ENCODE measurements at regions of chr5 and their contacts with region 1.

Region 1: DNA sequence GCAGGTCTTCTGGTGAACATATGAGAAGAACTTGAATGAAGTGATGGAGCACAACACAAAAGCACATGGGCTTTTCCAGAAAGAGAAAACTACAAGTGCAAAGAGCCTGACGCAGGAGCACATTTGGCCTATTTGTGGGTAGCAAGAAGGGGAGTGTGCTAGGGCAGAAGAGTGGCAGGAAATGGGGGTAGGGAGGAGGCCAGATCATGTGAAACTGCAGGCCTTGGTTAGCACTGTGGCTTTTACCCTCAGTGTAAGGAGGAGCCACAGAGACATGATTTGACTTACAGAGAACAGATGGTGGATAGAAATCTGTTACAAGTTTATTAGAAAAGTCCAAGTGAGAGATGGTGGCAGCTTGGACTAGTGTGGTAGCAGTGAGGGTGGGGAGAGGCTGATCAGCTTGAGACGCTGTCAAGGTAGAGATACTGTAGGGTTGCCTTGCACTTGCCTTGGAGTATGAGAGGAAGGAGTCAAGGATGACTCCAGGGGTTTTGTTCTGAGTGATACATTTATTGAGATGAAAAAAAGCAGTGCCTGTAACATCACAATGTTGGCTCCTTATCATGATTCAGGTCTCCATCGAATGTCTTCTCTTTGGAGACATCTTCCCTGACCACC is 126.7 kb downstream of the PPP2R2B start:
- DNase-seq: peak; percentile 31 to 92 (median 58)
- ATAC-seq: peak; percentile 98
- H3K4me3 ChIP-seq: peak overlapping the region in 1 of 2 experiments; percentile 25
- H3K4me3 Mint-ChIP-seq: peak overlapping the region; percentile 58
- H3K27ac ChIP-seq: peak overlapping the region; percentile 37 to 80
- H3K27ac Mint-ChIP-seq: peak overlapping the region; percentile 92
- H3K4me1 ChIP-seq: peaks cover 50% of the 10 kb centered on the region
- H3K4me1 Mint-ChIP-seq: peaks cover 58% of the 10 kb centered on the region
- H3K27me3 ChIP-seq: no peaks in the 10 kb centered on the region
- H3K27me3 Mint-ChIP-seq: no peaks in the 10 kb centered on the region
- CTCF ChIP-seq: no peak

Region 2: GRCh38 chr5:146878476-146879172 is 126.7 kb after region 1 on chr5 and contains the start of gene PPP2R2B:
- CTCF ChIA-PET with region 1: interaction called, 3 read pairs
- POLR2A ChIA-PET with region 1: interaction called, 4 read pairs
- intact Hi-C with region 1: loop called in 1 of 2 experiments (anchors 10 kb)
- DNase-seq: peak in 8 of 9 experiments; percentile 1 to 77 (median 60)
- ATAC-seq: peak; percentile 80
- H3K4me3 ChIP-seq: peak within 1 kb of the TSS; percentile 73 to 77
- H3K4me3 Mint-ChIP-seq: peak within 1 kb of the TSS; percentile 91
- H3K27ac ChIP-seq: peak within 1 kb of the TSS in 1 of 2 experiments; percentile 53
- H3K27ac Mint-ChIP-seq: peak within 1 kb of the TSS; percentile 64
- H3K4me1 ChIP-seq: peaks cover 13% of the 10 kb centered on the region
- H3K4me1 Mint-ChIP-seq: peaks cover 27% of the 10 kb centered on the region
- H3K27me3 ChIP-seq: no peaks in the 10 kb centered on the region
- H3K27me3 Mint-ChIP-seq: peaks cover 17% of the 10 kb centered on the region
- CTCF ChIP-seq: no peak
- total RNA-seq, gene PPP2R2B: 4.7 to 7.0 TPM